ENCODE measurements at regions of chr6 and their contacts with region 1.

Region 1: GRCh38 chr6:136317021-136317694 is 27.5 kb upstream of the BCLAF1 start:
- DNase-seq: peak; percentile 45 to 60
- H3K4me3 ChIP-seq: no peak overlapping the region
- H3K27ac ChIP-seq: no peak overlapping the region
- H3K4me1 ChIP-seq: no peaks in the 10 kb centered on the region
- H3K27me3 ChIP-seq: no peaks in the 10 kb centered on the region
- CTCF ChIP-seq: peak; percentile 94

Region 2: GRCh38 chr6:135506270-135506997 is 810.7 kb before region 1 on chr6:
- CTCF ChIA-PET with region 1: no interaction called
- POLR2A ChIA-PET with region 1: no interaction called
- intact Hi-C with region 1: loop called (anchors 2 kb)
- DNase-seq: peak; percentile 3 to 45
- H3K4me3 ChIP-seq: no peak overlapping the region
- H3K27ac ChIP-seq: no peak overlapping the region
- H3K4me1 ChIP-seq: no peaks in the 10 kb centered on the region; the same call in 1 of the 2 replicates
- H3K27me3 ChIP-seq: no peaks in the 10 kb centered on the region
- CTCF ChIP-seq: peak; percentile 81